ENCODE measurements at regions of chr6 and their contacts with region 1.

Region 1: DNA sequence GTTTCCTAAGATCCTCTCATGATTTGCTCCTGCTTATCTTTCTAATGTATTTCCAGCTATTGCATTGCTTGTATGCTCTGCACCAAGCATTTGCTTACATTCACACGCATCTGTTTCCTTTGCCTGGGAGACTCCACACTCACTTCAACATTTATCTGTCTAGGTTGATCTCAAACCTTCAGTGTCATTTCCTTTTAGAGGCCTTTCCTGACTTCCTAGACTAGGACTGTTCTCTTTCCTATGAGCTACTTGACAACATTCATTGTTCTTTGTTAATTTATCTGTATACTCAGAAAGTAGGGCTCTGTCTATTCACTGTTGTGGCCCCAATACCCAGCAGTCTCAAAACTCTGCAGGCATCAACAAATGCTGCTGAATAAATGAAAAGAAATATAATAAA is 84.4 kb downstream of the WASF1 start:
- DNase-seq: peak; percentile 93
- H3K4me3 ChIP-seq: no peak overlapping the region
- H3K27ac ChIP-seq: peak overlapping the region; percentile 80
- H3K4me1 ChIP-seq: peaks cover 36% of the 10 kb centered on the region
- H3K27me3 ChIP-seq: no peaks in the 10 kb centered on the region
- CTCF ChIP-seq: no peak
- POLR2A ChIP-seq: no peak

Region 2: DNA sequence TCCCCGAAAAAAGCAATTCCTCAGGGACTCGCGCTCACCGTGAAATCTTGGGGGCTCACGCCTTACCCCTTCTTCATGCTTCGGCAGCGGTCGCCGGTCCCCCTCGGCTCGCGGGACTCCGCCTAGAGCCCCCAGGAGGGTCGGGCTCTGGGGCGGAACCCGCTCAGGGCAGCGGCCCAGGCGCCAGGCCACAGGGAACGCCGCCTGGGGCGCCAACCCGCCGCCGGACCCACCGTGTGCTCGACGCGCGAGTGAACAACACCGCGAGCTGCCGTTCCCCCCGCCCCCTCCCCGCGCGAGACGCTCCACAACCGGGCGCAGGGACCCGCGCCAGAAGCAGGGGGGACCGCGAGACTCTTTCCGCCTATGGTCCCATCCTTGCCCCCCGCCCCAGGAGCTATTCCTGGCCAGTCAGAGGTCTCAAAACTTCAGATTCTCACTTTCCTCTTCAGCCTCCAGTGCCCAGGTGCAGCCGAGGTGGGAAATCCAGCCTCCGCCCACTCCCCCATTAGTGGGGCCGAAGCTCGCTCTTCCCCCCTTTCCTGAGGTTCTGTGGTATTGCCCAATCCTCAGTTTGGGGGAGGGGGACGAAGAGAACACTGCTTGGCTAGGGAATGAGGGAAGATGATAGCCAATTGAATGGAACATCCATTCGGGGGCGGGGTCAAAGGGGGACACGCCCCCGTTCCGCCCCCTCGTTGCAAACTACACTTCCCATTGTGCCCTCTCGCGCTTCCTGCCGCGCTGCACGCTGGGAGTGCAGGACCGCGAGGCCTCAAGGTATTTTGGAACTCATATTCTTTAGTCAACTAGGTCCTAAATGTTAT is 84.5 kb after region 1 on chr6 and contains the start of gene WASF1:
- CTCF ChIA-PET with region 1: interaction called, 6 read pairs
- POLR2A ChIA-PET with region 1: interaction called, 3 read pairs
- dilution Hi-C with region 1: no loop called
- intact Hi-C with region 1: loop called (anchors 1 kb)
- DNase-seq: peak; percentile 99
- H3K4me3 ChIP-seq: peak within 1 kb of the TSS; percentile 61 to 94 (median 92)
- H3K27ac ChIP-seq: peak within 1 kb of the TSS; percentile 87
- H3K4me1 ChIP-seq: peaks cover 30% of the 10 kb centered on the region
- H3K27me3 ChIP-seq: no peaks in the 10 kb centered on the region
- CTCF ChIP-seq: no peak
- POLR2A ChIP-seq: peak; percentile 63
- total RNA-seq, gene WASF1: 20.9 and 23.2 TPM in 2 replicates

Region 3: GRCh38 chr6:110738899-110739365 is 643.8 kb after region 1 on chr6:
- CTCF ChIA-PET with region 1: no interaction called
- POLR2A ChIA-PET with region 1: no interaction called
- dilution Hi-C with region 1: no loop called
- intact Hi-C with region 1: no loop called
- DNase-seq: no peak
- H3K4me3 ChIP-seq: no peak overlapping the region
- H3K27ac ChIP-seq: no peak overlapping the region
- H3K4me1 ChIP-seq: no peaks in the 10 kb centered on the region
- H3K27me3 ChIP-seq: no peaks in the 10 kb centered on the region
- CTCF ChIP-seq: no peak
- POLR2A ChIP-seq: no peak